Heart left ventricle (tissue), 16 donors: ENCODE measurements at regions of chr13 and their contacts with region 1.

Region 1: GRCh38 chr13:95676762-95677563 is at the start of gene DNAJC3:
- DNase-seq: peak; percentile 98 to 100 (median 99)
- ATAC-seq: peak; percentile 98 to 99 (median 98)
- H3K4me3 ChIP-seq: peak within 1 kb of the TSS; percentile 79 to 98 (median 89)
- H3K27ac ChIP-seq: peak within 1 kb of the TSS; percentile 89 to 98 (median 95)
- H3K4me1 ChIP-seq: peaks cover 0 to 55% (median 33%) of the 10 kb centered on the region in 12 donors
- H3K27me3 ChIP-seq: no peaks in the 10 kb centered on the region
- CTCF ChIP-seq: no peak
- POLR2A ChIP-seq: peak; percentile 74 to 98
- total RNA-seq, gene DNAJC3: 23.5 to 43.9 (median 33.7) TPM

Region 2: DNA sequence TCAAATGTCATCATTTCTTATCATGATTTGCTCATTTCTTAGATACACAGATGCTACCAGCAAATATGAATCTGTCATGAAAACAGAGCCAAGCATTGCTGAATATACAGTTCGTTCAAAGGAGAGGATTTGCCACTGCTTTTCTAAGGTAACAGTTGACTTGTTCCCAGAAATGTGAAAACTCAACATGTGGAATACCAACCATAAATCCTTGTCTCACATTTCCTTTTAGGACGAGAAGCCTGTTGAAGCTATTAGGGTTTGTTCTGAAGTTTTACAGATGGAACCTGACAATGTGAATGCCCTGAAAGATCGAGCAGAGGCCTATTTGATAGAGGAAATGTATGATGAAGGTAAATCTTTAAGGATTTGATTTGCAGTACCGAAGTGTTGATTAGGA is 86.6 kb after region 1 on chr13:
- intact Hi-C with region 1: loop called in 1 of 10 experiments (anchors 10 kb)
- DNase-seq: no peak
- ATAC-seq: no peak
- H3K4me3 ChIP-seq: no peak overlapping the region
- H3K27ac ChIP-seq: no peak overlapping the region
- H3K4me1 ChIP-seq: no peaks in the 10 kb centered on the region
- H3K27me3 ChIP-seq: no peaks in the 10 kb centered on the region
- CTCF ChIP-seq: no peak
- POLR2A ChIP-seq: no peak